ENCODE measurements at regions of chr2 and their contacts with region 1.

Region 1: DNA sequence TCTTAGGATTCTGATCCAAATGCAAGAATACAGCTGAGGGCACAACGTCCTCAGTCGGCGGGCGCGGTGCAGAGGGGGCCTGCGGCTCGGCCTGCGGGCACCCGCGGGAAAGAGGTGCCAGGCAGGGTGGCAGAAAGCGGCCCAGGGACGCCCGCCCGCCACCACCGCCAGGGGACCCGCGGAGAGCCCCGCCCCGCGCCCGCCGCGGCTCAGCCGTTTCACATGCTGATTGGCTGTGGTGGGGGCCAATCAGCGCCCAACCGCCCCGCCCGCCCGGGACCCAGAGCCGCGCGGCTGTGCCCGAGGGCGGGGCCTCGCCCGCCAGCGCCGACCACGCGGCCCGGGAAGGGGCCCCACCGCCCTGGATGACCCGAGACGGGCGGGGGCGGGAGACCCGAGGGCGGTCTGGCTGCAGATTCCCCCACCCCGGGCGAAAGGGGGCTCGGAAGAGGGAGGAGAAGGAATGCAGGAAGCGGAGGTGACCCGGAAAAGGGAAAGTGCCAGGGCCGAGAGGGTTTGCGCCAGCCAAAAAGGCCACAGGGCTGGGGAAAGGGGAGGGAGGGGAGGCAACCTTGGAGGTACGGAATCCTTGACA is 8.0 kb downstream of the IRS1 start:
- DNase-seq: peak; percentile 96

Region 2: DNA sequence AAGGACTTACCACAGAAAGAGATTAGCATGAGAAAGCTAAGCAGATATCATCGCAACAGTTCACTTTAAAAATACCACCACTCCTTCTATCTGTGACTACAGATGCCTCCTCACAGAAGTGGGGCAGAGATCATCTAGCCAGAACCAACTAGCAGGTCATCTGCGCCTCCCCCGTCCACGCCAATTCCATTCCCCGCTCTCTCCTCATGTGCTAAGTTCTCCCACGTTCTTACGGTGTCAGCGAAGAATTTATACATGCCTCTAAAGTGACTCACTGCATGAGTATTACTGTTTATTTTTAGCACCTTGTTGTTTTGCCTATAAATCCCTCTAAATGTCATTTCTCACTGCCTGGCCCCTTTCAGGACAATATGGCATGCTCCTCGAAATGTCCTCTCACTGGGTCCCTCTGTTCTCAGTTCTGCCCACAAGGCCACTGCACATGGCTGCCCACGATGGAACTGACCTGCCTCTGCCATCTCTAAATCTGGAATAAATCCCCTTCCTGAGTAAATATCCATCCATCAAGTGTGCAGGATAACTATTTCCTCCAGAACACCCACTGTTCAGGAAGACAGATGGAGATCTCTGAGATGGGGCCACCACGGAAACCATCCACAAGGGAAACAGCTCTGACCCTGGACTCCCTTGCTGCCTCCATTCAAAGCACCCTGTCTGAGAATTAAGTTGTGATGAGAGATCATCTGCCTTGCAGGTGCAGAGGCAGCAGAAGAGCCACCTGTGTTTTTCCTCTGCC is 129.6 kb before region 1 on chr2:
- intact Hi-C with region 1: loop called in 1 of 2 experiments (anchors 10 kb)
- DNase-seq: no peak

Region 3: DNA sequence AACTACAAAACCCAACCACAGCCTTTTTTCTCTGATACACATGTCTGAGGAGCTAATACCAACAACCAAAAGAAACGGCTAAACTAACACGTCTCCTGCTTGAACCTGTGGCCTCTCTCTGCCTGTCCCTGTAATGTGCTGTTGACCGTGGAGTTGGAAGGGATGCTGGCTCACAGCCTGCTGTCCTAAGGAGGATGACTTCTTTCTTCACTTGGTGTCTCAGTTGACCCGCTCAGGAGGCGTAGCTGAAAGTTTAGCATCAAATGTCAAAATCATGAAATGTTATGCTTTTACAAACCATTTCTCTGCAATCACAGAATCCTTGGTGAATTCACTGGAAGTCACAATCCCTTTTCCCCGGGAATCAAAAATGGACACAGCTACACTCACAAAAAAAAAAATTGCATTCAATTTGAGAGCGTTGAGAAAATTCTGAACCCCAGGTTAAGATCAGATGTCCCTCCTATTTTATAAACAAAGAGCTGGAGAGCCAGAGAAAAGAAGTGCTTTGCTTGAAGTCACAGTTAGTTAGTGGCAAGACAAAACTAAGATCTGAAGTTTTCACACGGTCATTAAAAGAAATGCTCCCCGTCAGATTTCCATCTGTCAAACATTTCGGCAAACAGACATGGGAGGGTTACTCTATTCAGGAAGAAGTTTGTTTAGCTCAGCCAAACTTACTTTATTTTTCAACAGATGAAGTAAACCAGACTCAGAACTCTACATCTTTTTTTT is 66.3 kb before region 1 on chr2:
- intact Hi-C with region 1: no loop called
- DNase-seq: no peak

Region 4: DNA sequence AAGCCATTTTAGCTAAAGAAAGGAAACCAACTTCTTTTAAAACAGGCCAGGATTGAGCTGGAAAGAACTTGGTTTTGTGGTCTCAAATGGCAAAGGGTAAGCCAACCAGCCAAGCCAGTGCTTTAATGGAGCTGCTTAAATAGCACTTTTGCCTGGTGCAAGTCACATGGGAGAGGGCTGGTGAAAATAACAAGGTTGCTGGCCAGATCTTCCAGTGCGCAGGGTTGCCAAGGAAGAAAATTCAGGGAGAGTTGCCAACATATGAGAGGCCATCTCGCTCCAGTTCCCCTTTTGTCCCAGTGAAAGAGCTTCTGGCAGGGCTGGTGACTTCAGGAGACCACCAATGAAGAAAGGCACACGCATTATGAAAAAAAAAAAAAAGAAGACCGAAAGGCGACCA is 49.2 kb before region 1 on chr2:
- intact Hi-C with region 1: loop called in 1 of 2 experiments (anchors 10 kb)
- DNase-seq: no peak

Region 5: GRCh38 chr2:227623234-227623633 is 831.6 kb after region 1 on chr2:
- intact Hi-C with region 1: no loop called
- DNase-seq: no peak